OCI-LY7 (cell line): ENCODE measurements at regions of chr17 and their contacts with region 1.

Region 1: GRCh38 chr17:21126645-21127510 is at the start of gene DHRS7B:
- DNase-seq: peak; percentile 98
- H3K4me3 ChIP-seq: peak within 1 kb of the TSS; percentile 81
- H3K27ac ChIP-seq: peak within 1 kb of the TSS; percentile 68
- H3K4me1 ChIP-seq: peaks cover 19% of the 10 kb centered on the region
- CTCF ChIP-seq: peak; percentile 16; the same call in 1 of the 2 replicates
- total RNA-seq, gene DHRS7B: 11.6 and 16.0 TPM in 2 replicates

Region 2: GRCh38 chr17:21007646-21008045 is 119.2 kb before region 1 on chr17:
- CTCF ChIA-PET with region 1: no interaction called
- POLR2A ChIA-PET with region 1: no interaction called
- intact Hi-C with region 1: no loop called
- DNase-seq: no peak
- H3K4me3 ChIP-seq: no peak overlapping the region
- H3K27ac ChIP-seq: no peak overlapping the region
- H3K4me1 ChIP-seq: no peaks in the 10 kb centered on the region
- CTCF ChIP-seq: no peak

Region 3: DNA sequence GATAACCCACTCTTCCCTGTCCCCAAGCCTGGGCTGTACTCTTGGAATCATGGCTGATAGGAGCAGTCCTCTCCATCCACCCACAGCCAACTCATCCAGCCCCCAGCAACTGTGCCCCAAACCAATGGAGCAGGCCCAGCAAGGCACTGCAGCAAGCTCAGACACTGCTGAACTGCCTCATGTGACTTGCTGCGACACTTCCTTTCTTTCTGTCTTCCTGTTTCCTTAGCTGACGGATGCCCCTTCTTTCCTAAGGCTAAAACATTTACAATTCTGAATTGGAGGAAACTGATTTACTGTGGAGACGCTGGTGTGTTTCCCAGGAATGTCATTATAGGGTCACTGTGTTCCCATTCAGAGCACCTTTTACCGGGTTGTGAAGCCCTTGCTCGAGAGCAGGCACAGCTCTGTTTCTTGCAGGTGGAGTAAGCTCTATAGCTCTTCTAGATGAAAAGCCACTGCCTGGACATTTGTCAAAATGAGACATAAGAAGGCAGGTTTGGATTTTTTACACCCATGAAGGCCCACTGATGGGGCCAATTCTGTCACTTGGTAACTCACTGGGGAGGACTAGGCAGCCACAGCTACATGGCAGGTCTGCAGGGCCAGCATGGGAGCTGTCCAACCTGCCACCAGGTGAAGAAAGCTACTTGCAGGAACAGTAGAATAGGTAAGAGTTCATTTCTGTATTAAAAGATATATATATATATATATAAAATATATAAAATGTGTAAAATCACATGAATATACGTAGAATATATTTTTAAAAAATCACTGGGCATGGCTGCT is 59.7 kb after region 1 on chr17:
- CTCF ChIA-PET with region 1: no interaction called
- POLR2A ChIA-PET with region 1: no interaction called
- intact Hi-C with region 1: no loop called
- DNase-seq: no peak
- H3K4me3 ChIP-seq: no peak overlapping the region
- H3K27ac ChIP-seq: no peak overlapping the region
- H3K4me1 ChIP-seq: no peaks in the 10 kb centered on the region
- CTCF ChIP-seq: no peak

Region 4: GRCh38 chr17:21330436-21331160 is 203.7 kb after region 1 on chr17:
- CTCF ChIA-PET with region 1: no interaction called
- POLR2A ChIA-PET with region 1: no interaction called
- intact Hi-C with region 1: no loop called
- DNase-seq: no peak
- H3K4me3 ChIP-seq: no peak overlapping the region
- H3K27ac ChIP-seq: no peak overlapping the region
- H3K4me1 ChIP-seq: peaks cover 22% of the 10 kb centered on the region
- CTCF ChIP-seq: no peak

Region 5: DNA sequence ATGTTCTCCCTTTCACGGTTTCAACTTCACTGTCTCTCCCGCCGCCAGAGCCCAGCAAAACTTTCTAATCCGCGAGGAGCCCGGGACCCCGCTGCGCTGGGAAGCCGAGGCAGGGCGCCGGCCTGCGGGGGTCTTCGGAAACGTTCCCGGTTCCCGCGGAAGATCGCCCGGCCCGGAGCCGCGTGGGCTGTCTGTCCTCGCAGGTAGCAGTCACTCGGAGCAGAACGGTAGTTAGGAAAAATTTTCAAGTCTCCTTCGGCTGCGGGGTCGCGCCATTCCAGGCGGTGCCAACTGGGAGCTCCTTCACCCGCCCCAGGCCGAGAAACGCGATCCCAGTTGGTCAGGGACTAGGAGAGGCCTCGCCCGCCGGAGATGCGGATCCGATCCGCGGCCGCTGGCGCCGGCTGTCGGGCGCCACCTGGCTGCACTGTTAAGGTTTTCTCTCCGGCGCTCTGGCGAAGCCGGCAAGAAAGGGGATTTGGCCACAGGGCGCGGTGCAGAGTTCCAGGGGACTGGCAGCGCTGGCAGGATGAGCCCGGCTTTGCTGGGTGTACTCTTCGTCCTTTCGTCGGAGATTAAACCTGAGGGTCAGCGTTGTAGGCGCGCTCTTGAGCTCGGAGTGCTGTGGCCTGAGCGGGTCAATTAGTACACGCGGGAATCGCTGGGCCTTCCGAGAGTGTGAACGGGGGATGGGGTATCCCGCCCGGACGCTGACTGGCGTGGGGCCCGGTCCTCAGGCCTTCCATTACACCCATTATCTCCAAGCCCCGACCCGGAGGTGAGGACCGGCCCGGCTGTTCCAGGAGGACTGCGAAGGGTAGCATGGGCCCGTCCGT is 384.7 kb after region 1 on chr17:
- CTCF ChIA-PET with region 1: no interaction called
- POLR2A ChIA-PET with region 1: no interaction called
- intact Hi-C with region 1: loop called (anchors 5 kb)
- DNase-seq: peak; percentile 50
- H3K4me3 ChIP-seq: no peak overlapping the region
- H3K27ac ChIP-seq: no peak overlapping the region
- H3K4me1 ChIP-seq: peaks cover 3% of the 10 kb centered on the region
- CTCF ChIP-seq: peak; percentile 73